HepG2 (cell line): ENCODE measurements at regions of chr15 and their contacts with region 1.

Region 1: DNA sequence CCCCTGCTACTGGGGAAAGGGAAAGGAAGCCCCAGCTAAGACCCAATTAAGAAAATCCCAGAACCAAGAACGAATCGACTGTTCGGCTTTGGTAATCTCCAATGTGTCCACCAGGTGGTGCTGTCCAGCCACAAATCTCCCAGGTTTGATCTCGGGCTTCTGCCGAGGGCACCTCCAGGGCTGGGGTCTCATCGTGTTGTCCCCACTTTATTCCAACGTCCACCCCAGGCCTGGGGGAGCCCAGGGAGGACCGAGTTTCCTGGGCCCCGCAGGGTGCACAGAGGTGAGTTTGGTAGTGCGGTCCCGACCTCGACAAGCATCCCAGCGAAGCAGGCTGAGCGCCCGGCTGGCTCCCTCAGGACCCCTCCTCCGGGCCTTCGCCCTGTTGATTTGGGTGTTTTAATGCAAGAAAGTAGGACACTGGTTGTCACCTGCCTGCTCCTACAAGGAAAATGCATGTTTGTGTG is 185.1 kb downstream of the GOLGA6L6 start:
- DNase-seq: peak; percentile 45
- ATAC-seq: peak; percentile 81
- H3K4me3 ChIP-seq: no peak overlapping the region
- H3K27ac ChIP-seq: no peak overlapping the region
- H3K4me1 ChIP-seq: no peaks in the 10 kb centered on the region
- H3K27me3 ChIP-seq: no peaks in the 10 kb centered on the region
- CTCF ChIP-seq: peak; percentile 86
- EP300 ChIP-seq: no peak
- POLR2A ChIP-seq: no peak
- RAD21 ChIP-seq: peak; percentile 62

Region 2: GRCh38 chr15:19987389-19988048 is 369.0 kb before region 1 on chr15:
- CTCF ChIA-PET with region 1: no interaction called
- POLR2A ChIA-PET with region 1: no interaction called
- in situ Hi-C with region 1: no loop called
- intact Hi-C with region 1: no loop called
- DNase-seq: peak; percentile 15
- ATAC-seq: peak; percentile 91
- H3K4me3 ChIP-seq: no peak overlapping the region
- H3K27ac ChIP-seq: no peak overlapping the region
- H3K4me1 ChIP-seq: no peaks in the 10 kb centered on the region
- H3K27me3 ChIP-seq: no peaks in the 10 kb centered on the region
- CTCF ChIP-seq: peak; percentile 66
- EP300 ChIP-seq: no peak
- POLR2A ChIP-seq: no peak
- RAD21 ChIP-seq: no peak

Region 3: GRCh38 chr15:22224241-22224671 is 1867.8 kb after region 1 on chr15:
- CTCF ChIA-PET with region 1: interaction called, 32 read pairs
- POLR2A ChIA-PET with region 1: no interaction called
- in situ Hi-C with region 1: no loop called
- intact Hi-C with region 1: no loop called
- DNase-seq: no peak
- ATAC-seq: no peak
- H3K4me3 ChIP-seq: no peak overlapping the region
- H3K27ac ChIP-seq: no peak overlapping the region
- H3K4me1 ChIP-seq: no peaks in the 10 kb centered on the region; the same call in 1 of the 2 replicates
- H3K27me3 ChIP-seq: no peaks in the 10 kb centered on the region; a peak in 1 of 5 replicates
- CTCF ChIP-seq: no peak
- EP300 ChIP-seq: no peak
- POLR2A ChIP-seq: no peak
- RAD21 ChIP-seq: no peak